ENCODE measurements at regions of chr2 and their contacts with region 1.

Region 1: GRCh38 chr2:200483729-200484198 is 26.1 kb downstream of the KCTD18 start:
- DNase-seq: peak; percentile 63
- H3K4me3 Mint-ChIP-seq: no peak overlapping the region
- H3K27ac Mint-ChIP-seq: no peak overlapping the region
- H3K4me1 Mint-ChIP-seq: peaks cover 19% of the 10 kb centered on the region
- H3K27me3 Mint-ChIP-seq: no peaks in the 10 kb centered on the region
- CTCF ChIP-seq: peak; percentile 57

Region 2: GRCh38 chr2:199985625-199986207 is 498.0 kb before region 1 on chr2:
- CTCF ChIA-PET with region 1: interaction called, 239 read pairs
- POLR2A ChIA-PET with region 1: interaction called, 11 read pairs
- intact Hi-C with region 1: loop called (anchors 1 kb)
- DNase-seq: peak; percentile 83
- H3K4me3 Mint-ChIP-seq: no peak overlapping the region
- H3K27ac Mint-ChIP-seq: no peak overlapping the region
- H3K4me1 Mint-ChIP-seq: peaks cover 6% of the 10 kb centered on the region
- H3K27me3 Mint-ChIP-seq: no peaks in the 10 kb centered on the region
- CTCF ChIP-seq: peak; percentile 64

Region 3: DNA sequence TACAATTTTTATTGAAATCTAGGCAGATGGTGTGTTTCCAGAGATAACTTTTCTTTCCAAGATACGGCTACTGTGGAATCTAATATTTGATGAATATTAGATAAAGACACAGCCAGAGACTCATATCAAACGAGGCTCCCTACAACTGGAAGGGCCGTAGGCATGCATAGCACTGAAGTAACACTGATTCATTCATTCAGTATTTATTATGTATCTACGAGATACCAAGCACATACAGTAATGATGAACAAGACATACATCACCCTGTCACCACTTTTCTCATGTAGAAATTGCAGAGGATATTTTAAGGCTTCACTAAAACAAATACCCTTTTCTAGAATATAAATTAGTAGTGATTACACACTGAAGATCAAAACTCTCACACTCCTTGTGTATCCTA is 48.4 kb before region 1 on chr2:
- CTCF ChIA-PET with region 1: no interaction called
- POLR2A ChIA-PET with region 1: no interaction called
- intact Hi-C with region 1: no loop called
- DNase-seq: no peak
- H3K4me3 Mint-ChIP-seq: no peak overlapping the region
- H3K27ac Mint-ChIP-seq: no peak overlapping the region
- H3K4me1 Mint-ChIP-seq: peaks cover 13% of the 10 kb centered on the region
- H3K27me3 Mint-ChIP-seq: no peaks in the 10 kb centered on the region
- CTCF ChIP-seq: no peak

Region 4: DNA sequence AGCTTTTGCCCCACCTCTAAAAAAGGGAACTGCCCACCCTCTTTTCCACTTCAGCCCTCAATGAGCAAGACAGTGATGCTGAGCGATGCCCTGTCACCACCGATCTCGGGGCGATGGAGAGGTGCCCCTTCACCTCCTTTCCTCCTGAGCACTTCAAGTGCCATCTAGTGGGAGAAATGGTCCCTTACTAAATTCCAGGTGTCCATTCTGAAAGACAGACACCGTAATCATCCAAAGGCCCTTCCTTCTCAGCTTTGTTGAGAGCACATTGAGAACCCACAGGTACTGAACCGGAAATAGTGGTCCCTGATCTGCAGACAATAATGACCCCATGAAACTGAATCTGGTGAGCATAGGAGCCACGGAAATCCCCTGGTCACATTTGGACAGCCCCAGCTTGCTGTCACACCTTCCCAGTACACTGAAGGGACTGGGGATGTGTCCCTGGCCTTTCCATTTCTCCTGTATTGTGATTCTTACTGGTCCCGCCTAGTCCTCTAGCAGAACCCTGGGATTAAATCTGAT is 12.4 kb before region 1 on chr2:
- CTCF ChIA-PET with region 1: interaction called, 30 read pairs
- POLR2A ChIA-PET with region 1: interaction called, 4 read pairs
- intact Hi-C with region 1: no loop called
- DNase-seq: peak; percentile 36
- H3K4me3 Mint-ChIP-seq: no peak overlapping the region
- H3K27ac Mint-ChIP-seq: peak overlapping the region; percentile 11
- H3K4me1 Mint-ChIP-seq: no peaks in the 10 kb centered on the region
- H3K27me3 Mint-ChIP-seq: no peaks in the 10 kb centered on the region
- CTCF ChIP-seq: peak; percentile 45

Region 5: GRCh38 chr2:200509612-200510433 is 26.1 kb after region 1 on chr2 and contains the start of gene KCTD18:
- CTCF ChIA-PET with region 1: interaction called, 16 read pairs
- POLR2A ChIA-PET with region 1: interaction called, 4 read pairs
- intact Hi-C with region 1: no loop called
- DNase-seq: peak; percentile 80
- H3K4me3 Mint-ChIP-seq: peak within 1 kb of the TSS; percentile 82
- H3K27ac Mint-ChIP-seq: peak within 1 kb of the TSS; percentile 76
- H3K4me1 Mint-ChIP-seq: peaks cover 9% of the 10 kb centered on the region
- H3K27me3 Mint-ChIP-seq: no peaks in the 10 kb centered on the region
- CTCF ChIP-seq: peak; percentile 75
- total RNA-seq, gene KCTD18: 13.3 and 13.5 TPM in 2 replicates

Region 6: DNA sequence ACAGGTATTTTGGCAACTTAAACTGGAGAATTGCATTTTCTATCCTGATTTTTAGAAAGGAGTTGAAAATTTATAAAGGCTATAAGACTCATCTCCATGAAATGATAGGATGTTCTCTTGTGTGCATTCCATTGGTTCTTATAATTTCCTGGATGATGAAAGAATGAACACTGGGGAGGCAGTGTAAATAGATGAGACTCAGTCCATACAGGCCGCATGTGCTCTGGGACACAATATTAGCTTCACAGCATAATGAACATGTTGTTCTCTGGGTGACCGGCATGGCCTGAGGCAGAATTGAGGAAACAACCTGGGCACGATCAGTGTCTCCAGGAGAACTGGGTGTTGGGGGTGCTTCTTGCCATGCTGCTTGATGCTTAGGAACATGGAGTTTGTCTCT is 140.9 kb after region 1 on chr2:
- CTCF ChIA-PET with region 1: no interaction called
- POLR2A ChIA-PET with region 1: no interaction called
- intact Hi-C with region 1: no loop called
- DNase-seq: no peak
- H3K4me3 Mint-ChIP-seq: no peak overlapping the region
- H3K27ac Mint-ChIP-seq: peak overlapping the region; percentile 88
- H3K4me1 Mint-ChIP-seq: peaks cover 44% of the 10 kb centered on the region
- H3K27me3 Mint-ChIP-seq: no peaks in the 10 kb centered on the region
- CTCF ChIP-seq: no peak

Region 7: DNA sequence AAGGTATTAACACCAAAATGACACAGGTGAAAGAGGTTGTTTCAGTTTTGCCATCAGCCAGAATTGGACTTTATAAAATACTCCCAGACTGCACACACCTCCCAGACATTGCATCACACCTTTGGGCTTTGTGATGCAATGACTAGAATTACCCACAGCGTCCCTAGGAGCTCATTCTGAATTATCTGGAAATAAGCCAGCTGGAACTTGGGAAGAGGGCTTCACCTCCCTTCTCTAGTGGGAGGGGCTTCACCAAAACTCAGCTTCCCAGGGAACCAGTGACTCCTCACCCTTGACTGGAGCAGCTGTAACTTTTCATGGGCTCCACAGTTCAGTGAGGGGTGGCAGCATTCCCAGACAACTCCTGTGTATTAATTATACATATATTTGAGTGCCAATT is 244.9 kb after region 1 on chr2:
- CTCF ChIA-PET with region 1: interaction called, 10 read pairs
- POLR2A ChIA-PET with region 1: no interaction called
- intact Hi-C with region 1: no loop called
- DNase-seq: peak; percentile 96
- H3K4me3 Mint-ChIP-seq: no peak overlapping the region
- H3K27ac Mint-ChIP-seq: no peak overlapping the region
- H3K4me1 Mint-ChIP-seq: peaks cover 9% of the 10 kb centered on the region
- H3K27me3 Mint-ChIP-seq: peaks cover 18% of the 10 kb centered on the region
- CTCF ChIP-seq: no peak